Astrocyte of the cerebellum (primary cell): ENCODE measurements at regions of chr14 and their contacts with region 1.

Region 1: GRCh38 chr14:71362920-71363584 is 455.8 kb downstream of the PCNX1 start:
- DNase-seq: no peak
- H3K4me3 ChIP-seq: no peak overlapping the region
- CTCF ChIP-seq: no peak

Region 2: GRCh38 chr14:71399057-71399487 is 36.0 kb after region 1 on chr14:
- in situ Hi-C with region 1: loop called (anchors 5 kb)
- DNase-seq: no peak
- H3K4me3 ChIP-seq: no peak overlapping the region
- CTCF ChIP-seq: no peak